ENCODE measurements at regions of chr20 and their contacts with region 1.

Region 1: GRCh38 chr20:48620519-48621254 is 207.1 kb downstream of the PREX1 start:
- DNase-seq: peak; percentile 93
- H3K4me3 ChIP-seq: peak overlapping the region in 3 of 4 donors; percentile 20 to 38 (median 37)
- H3K27ac ChIP-seq: peak overlapping the region; percentile 2 to 65 (median 30)
- H3K4me1 ChIP-seq: peaks cover 0 to 22% (median 21%) of the 10 kb centered on the region in 4 donors
- H3K27me3 ChIP-seq: no peaks in the 10 kb centered on the region
- CTCF ChIP-seq: peak; percentile 78 to 96 (median 89)
- EP300 ChIP-seq: no peak
- POLR2A ChIP-seq: no peak

Region 2: GRCh38 chr20:47663333-47664067 is 957.2 kb before region 1 on chr20:
- intact Hi-C with region 1: loop called (anchors 1 kb)
- DNase-seq: peak; percentile 88
- H3K4me3 ChIP-seq: no peak overlapping the region
- H3K27ac ChIP-seq: no peak overlapping the region
- H3K4me1 ChIP-seq: peaks cover 0 to 9% (median 5%) of the 10 kb centered on the region in 4 donors
- H3K27me3 ChIP-seq: no peaks in the 10 kb centered on the region
- CTCF ChIP-seq: peak; percentile 82 to 98 (median 92)
- EP300 ChIP-seq: no peak
- POLR2A ChIP-seq: no peak

Region 3: DNA sequence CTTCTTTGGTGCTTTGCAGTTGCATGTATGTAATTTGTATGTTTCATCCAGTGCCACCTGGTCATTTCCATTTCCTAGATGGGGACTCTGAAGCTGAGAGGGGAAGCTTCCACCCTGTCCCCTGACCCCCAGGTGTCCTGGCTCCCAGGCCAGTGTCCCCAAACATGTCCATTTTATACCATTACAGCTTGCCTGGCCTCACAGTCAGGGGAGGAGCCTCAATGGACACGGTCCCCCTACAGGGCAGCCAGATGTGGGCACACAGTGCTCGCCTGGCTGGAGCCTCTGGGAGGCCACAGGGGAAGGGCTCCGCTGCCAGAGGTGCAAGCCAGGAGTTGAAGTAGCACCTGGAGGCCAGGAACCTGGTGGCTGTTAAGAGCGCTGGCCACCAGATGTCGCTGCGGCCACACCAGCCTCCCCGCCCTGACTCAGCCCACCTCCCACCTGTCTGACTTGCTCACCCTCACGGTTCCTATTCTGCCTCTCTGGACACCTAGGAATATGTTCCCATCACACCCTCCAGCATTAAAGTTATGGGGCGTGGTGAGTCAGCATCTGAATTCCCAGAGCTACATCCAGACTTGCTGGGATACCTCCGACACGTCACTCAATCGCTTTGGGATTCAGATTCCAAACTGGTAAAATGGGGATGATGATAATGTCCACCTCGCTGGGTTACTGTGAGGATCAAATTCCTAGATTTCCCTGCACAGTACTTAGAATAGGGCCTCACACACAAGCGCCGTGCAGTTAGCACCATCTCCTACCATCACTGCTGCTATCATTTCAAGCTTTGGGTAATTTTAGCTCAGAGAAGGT is 942.8 kb before region 1 on chr20:
- intact Hi-C with region 1: loop called (anchors 1 kb)
- DNase-seq: no peak
- H3K4me3 ChIP-seq: no peak overlapping the region
- H3K27ac ChIP-seq: no peak overlapping the region
- H3K4me1 ChIP-seq: peaks cover 0 to 18% (median 15%) of the 10 kb centered on the region in 4 donors
- H3K27me3 ChIP-seq: no peaks in the 10 kb centered on the region
- CTCF ChIP-seq: peak; percentile 37 to 80 (median 68)
- EP300 ChIP-seq: no peak
- POLR2A ChIP-seq: no peak

Region 4: DNA sequence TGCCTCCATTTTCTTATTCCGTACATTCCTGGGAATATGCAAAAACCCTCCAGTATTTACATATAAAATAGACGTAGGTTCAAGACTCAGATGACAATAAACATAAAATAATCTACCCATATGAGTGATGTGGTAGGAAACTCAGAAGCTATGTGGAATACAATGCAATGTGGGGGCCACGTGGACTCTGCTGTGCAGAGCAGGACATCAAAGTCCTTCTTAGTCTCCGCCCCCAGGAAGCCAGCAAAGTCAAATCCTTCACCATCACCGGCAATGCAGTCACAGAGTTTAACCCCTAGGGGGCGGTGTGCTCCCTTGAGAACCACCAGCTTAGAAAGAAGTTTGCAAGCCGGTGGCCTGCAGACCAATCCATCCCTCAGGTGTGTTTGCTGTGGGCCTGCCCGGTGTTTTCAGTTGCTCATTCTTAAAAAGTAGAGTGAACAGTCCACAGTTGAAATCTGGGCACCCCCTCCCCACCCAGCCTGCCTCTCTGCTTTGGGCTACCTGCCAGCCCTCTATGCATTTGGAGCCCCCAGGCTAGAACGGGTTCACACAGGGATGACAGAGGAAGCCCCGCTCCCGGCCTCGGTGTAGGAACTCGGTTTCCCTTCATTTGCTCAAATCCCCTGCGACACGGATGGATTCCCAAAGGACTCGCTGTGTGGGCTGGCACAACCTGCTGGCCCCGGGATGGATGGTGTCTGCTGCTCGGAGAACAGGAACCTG is 895.3 kb before region 1 on chr20:
- intact Hi-C with region 1: loop called (anchors 2 kb)
- DNase-seq: peak; percentile 80
- H3K4me3 ChIP-seq: no peak overlapping the region
- H3K27ac ChIP-seq: no peak overlapping the region
- H3K4me1 ChIP-seq: peaks cover 0 to 18% (median 14%) of the 10 kb centered on the region in 4 donors
- H3K27me3 ChIP-seq: no peaks in the 10 kb centered on the region
- CTCF ChIP-seq: peak; percentile 31 to 86 (median 81)
- EP300 ChIP-seq: no peak
- POLR2A ChIP-seq: no peak

Region 5: DNA sequence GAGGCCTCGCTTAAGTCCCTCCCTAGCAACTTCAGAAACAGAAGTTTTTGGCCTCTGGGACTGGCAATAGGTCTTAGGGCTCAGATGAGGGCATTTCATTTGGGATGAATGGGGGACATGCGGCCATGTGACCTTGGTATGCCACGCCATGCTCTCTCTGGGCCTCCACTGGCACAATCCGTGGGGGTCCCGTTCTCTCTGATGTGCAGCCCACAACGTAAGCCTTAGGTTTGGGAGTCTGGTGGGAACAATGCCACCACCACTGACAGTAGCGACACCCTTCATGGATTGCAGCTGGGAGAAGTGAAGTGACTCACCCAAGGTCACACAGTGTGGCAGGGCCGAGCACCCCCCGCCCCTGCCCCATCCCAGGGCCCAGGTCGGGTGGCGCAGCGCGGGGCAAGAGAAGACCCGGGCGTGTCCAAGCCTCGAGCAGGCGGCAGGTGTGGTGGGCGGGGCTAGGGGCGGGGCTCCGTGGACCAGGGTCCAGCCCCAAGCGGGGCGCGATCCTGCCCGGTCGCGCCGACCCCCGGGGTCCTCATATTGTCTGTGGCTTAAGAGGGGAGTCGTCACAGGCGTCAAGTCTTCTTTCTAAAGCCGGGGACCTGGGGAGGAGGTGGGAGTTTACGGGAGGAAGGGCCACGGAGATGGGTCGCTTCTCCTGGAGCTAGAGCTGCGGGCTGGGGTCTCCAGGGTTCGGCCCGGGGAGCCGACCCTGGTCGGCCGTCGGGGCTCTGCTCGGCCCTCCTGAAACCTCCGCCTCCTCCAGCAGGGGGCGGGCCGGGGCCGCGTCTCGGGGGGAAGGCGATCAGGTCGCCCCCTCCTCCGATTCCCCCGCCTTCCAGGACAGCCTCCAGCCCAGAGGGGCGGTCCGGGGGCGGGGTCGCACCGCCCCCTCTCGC is 1569.2 kb after region 1 on chr20:
- intact Hi-C with region 1: no loop called
- DNase-seq: peak; percentile 97
- H3K4me3 ChIP-seq: peak overlapping the region; percentile 79 to 91 (median 86)
- H3K27ac ChIP-seq: peak overlapping the region; percentile 93 to 100 (median 98)
- H3K4me1 ChIP-seq: peaks cover 0 to 40% (median 31%) of the 10 kb centered on the region in 4 donors
- H3K27me3 ChIP-seq: no peaks in the 10 kb centered on the region
- CTCF ChIP-seq: peak; percentile 68 to 89 (median 78)
- EP300 ChIP-seq: peak in 1 of 4 donors; percentile 5
- POLR2A ChIP-seq: no peak